HEK293 (cell line): ENCODE measurements at regions of chr7 and their contacts with region 1.

Region 1: GRCh38 chr7:129343099-129343700 is 91.0 kb upstream of the STRIP2 start:
- H3K4me3 ChIP-seq: no peak overlapping the region
- H3K27ac ChIP-seq: no peak overlapping the region
- H3K4me1 ChIP-seq: no peaks in the 10 kb centered on the region
- CTCF ChIP-seq: peak; percentile 23; the same call in 1 of the 2 replicates

Region 2: DNA sequence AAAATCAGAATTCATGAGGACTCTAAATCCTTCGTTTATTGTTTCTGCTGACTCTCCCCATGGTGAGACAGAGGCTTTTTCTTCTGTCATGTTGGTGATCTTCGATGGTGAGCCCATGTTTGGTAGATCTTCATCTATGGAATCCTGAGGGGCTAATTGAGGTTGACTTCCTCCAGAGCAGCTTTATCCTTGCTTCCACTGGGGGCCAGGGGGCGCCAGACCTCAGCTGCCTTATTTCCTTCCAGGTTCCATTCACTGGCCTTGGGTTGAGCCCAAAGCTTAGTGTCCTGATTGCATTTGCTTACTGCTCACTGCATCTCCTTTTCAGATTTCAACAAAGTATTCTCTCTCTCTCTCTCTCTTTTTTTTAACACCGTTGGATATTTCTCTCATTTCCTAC is 1838.5 kb before region 1 on chr7:
- CTCF ChIA-PET with region 1: no interaction called
- POLR2A ChIA-PET with region 1: no interaction called
- H3K4me3 ChIP-seq: no peak overlapping the region
- H3K27ac ChIP-seq: no peak overlapping the region
- H3K4me1 ChIP-seq: no peaks in the 10 kb centered on the region
- CTCF ChIP-seq: no peak

Region 3: DNA sequence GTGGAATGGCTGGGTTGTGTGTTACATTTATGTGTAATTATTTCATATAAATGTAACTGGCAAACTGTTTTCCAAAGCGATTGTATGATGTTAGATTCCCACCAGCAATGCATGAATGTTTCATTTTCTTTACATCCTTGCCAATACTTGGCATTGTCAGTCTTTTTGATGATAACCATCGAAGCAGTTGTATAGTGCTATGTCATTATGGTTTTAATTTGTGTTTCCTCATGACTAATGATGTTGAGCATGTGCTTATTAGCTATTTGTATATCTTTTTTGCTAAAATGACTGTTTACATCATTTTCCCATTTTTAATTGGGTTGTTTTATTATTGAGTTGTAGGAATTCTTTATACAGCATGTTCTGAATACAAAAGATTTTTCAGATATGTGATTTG is 96.1 kb before region 1 on chr7:
- CTCF ChIA-PET with region 1: no interaction called
- POLR2A ChIA-PET with region 1: no interaction called
- H3K4me3 ChIP-seq: no peak overlapping the region
- H3K27ac ChIP-seq: no peak overlapping the region
- H3K4me1 ChIP-seq: 0 out of 2 replicates have a peak, but pooled peaks cover 2% of the 10 kb centered on the region
- CTCF ChIP-seq: no peak

Region 4: GRCh38 chr7:129332284-129333035 is 10.7 kb before region 1 on chr7:
- CTCF ChIA-PET with region 1: interaction called, 29 read pairs
- POLR2A ChIA-PET with region 1: no interaction called
- H3K4me3 ChIP-seq: no peak overlapping the region
- H3K27ac ChIP-seq: no peak overlapping the region
- H3K4me1 ChIP-seq: no peaks in the 10 kb centered on the region
- CTCF ChIP-seq: no peak

Region 5: DNA sequence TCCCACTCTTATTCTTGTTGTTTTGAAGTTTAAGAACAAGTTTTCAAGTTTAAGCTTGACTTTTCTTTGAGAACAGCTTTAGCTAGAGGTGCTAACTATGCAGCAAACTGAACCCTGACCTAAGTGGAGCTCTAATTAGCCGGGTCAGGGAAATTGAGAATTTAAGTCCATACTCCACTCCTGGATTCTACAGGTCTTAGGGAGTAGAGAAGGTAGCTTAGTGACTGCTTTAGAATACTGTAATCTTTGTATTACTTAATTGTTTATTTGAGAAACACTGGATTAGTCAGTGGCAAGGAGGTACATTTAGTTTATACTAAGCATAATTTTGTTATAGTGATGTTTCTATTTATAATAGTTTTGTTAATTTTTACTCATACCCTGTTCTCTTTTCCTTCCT is 16.4 kb after region 1 on chr7:
- CTCF ChIA-PET with region 1: interaction called, 12 read pairs
- POLR2A ChIA-PET with region 1: no interaction called
- H3K4me3 ChIP-seq: no peak overlapping the region
- H3K27ac ChIP-seq: no peak overlapping the region
- H3K4me1 ChIP-seq: no peaks in the 10 kb centered on the region; the same call in 1 of the 2 replicates
- CTCF ChIP-seq: no peak

Region 6: DNA sequence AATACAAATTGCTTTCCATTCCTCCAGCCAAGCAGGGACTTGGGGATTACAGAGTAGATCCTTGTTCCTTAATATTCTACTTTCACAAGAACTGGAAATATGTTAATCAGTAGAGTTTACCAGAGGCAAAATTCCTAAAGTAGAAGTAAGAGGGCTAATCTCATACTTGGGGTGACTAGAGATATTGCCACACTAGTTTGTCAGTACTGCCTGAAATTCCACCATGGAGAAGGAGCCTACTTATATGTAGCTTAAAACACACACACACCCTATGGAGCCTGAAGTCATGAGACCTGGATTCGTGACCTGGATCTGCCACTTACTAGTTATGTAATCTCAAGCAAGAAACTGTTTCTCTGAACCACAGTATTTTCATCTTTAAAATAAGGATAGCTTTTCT is 124.9 kb after region 1 on chr7:
- CTCF ChIA-PET with region 1: interaction called, 18 read pairs
- POLR2A ChIA-PET with region 1: no interaction called
- H3K4me3 ChIP-seq: no peak overlapping the region
- H3K27ac ChIP-seq: no peak overlapping the region
- H3K4me1 ChIP-seq: no peaks in the 10 kb centered on the region
- CTCF ChIP-seq: no peak